ENCODE measurements at regions of chr2 and their contacts with region 1.

Region 1: GRCh38 chr2:29293845-29294438 is 178.7 kb downstream of the CLIP4 start:
- DNase-seq: no peak
- H3K4me3 ChIP-seq: no peak overlapping the region
- H3K27ac ChIP-seq: no peak overlapping the region
- H3K4me1 ChIP-seq: no peaks in the 10 kb centered on the region
- H3K27me3 ChIP-seq: no peaks in the 10 kb centered on the region
- CTCF ChIP-seq: no peak
- EP300 ChIP-seq: no peak
- POLR2A ChIP-seq: no peak

Region 2: GRCh38 chr2:29249666-29250253 is 44.2 kb before region 1 on chr2:
- in situ Hi-C with region 1: no loop called
- intact Hi-C with region 1: loop called (anchors 2 kb)
- DNase-seq: no peak
- H3K4me3 ChIP-seq: no peak overlapping the region
- H3K27ac ChIP-seq: no peak overlapping the region
- H3K4me1 ChIP-seq: no peaks in the 10 kb centered on the region
- H3K27me3 ChIP-seq: no peaks in the 10 kb centered on the region
- CTCF ChIP-seq: no peak
- EP300 ChIP-seq: no peak
- POLR2A ChIP-seq: no peak

Region 3: GRCh38 chr2:30217644-30218337 is 923.8 kb after region 1 on chr2:
- in situ Hi-C with region 1: no loop called
- intact Hi-C with region 1: no loop called
- DNase-seq: peak; percentile 82
- H3K4me3 ChIP-seq: peak overlapping the region in 1 of 4 donors; percentile 14
- H3K27ac ChIP-seq: peak overlapping the region in 3 of 4 donors; percentile 36 to 57 (median 53)
- H3K4me1 ChIP-seq: peaks cover 0 to 16% (median 5%) of the 10 kb centered on the region in 4 donors
- H3K27me3 ChIP-seq: peaks cover 11% of the 10 kb centered on the region
- CTCF ChIP-seq: no peak
- EP300 ChIP-seq: no peak
- POLR2A ChIP-seq: peak; percentile 41